T-cell (primary cell): ENCODE measurements at regions of chr1 and their contacts with region 1.

Region 1: DNA sequence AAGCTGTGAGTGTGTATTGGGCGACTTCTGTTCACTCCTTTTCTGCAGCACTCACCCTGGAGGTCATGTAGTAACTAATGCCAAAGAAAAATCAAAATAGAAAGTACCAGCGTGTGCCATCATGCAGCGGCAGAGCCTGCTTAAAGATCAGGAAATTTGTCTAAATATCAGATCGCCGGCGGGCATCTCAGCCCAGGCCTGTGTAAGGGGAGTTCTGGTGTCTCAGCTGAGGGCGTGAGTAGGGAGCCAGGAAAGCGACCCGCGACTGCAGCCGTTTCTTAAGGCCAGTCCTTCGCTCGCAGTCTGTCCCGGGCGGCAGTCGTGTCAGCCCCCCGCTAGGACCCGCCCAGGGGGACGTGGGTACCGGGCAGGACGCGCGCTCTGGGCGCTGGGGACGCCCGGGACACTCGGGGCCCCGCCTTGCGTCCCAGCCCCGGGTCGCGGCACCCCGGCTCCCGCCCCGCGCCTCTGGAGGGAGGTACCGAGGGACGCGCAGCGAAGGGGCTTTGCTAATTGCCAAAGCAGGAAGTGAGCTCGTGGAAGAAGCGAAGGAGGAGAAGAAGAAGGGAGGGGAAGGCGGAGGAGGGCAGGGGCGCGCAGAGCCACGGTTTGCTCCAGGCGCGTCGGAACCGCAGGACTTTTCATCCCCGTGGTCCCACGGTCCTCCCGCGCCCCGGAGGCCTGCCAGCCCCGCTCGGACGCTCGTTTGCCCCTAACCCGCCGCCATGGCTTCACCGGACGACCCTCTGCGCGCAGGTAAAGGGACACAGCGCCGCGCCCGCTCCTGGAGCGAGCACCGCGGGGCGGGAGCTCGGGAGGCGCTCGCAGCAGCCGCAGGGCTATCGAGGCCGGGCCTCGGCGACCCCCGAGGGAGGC is 1.1 kb downstream of the EDARADD start:
- DNase-seq: peak in 33 of 35 experiments; percentile 3 to 64 (median 29)
- ATAC-seq: peak; percentile 77 to 88 (median 82)
- H3K4me3 ChIP-seq: peak overlapping the region; percentile 56 to 79
- H3K4me3 Mint-ChIP-seq: peak overlapping the region; percentile 88 to 96 (median 90)
- H3K27ac ChIP-seq: peak overlapping the region; percentile 63
- H3K27ac Mint-ChIP-seq: peak overlapping the region; percentile 86 to 88
- H3K4me1 ChIP-seq: peaks cover 0 to 20% of the 10 kb centered on the region in 2 experiments
- H3K4me1 Mint-ChIP-seq: peaks cover 16 to 35% (median 23%) of the 10 kb centered on the region in 3 donors
- H3K27me3 ChIP-seq: peaks cover 0 to 15% of the 10 kb centered on the region in 2 experiments
- H3K27me3 Mint-ChIP-seq: peaks cover 36 to 39% of the 10 kb centered on the region in 2 donors

Region 2: GRCh38 chr1:236365999-236366570 is 29.1 kb before region 1 on chr1:
- CTCF ChIA-PET with region 1: no interaction called
- POLR2A ChIA-PET with region 1: no interaction called
- DNase-seq: no peak
- ATAC-seq: no peak
- H3K4me3 ChIP-seq: no peak overlapping the region
- H3K4me3 Mint-ChIP-seq: no peak overlapping the region
- H3K27ac ChIP-seq: no peak overlapping the region
- H3K27ac Mint-ChIP-seq: no peak overlapping the region
- H3K4me1 ChIP-seq: no peaks in the 10 kb centered on the region
- H3K4me1 Mint-ChIP-seq: no peaks in the 10 kb centered on the region
- H3K27me3 ChIP-seq: no peaks in the 10 kb centered on the region
- H3K27me3 Mint-ChIP-seq: peaks cover 0 to 2% of the 10 kb centered on the region in 2 donors

Region 3: GRCh38 chr1:236416165-236416564 is 21.0 kb after region 1 on chr1:
- CTCF ChIA-PET with region 1: interaction called in 1 of 2 experiments, 6 read pairs
- POLR2A ChIA-PET with region 1: interaction called, 3 to 14 read pairs
- DNase-seq: peak in 33 of 35 experiments; percentile 11 to 87 (median 33)
- ATAC-seq: peak; percentile 80 to 96 (median 92)
- H3K4me3 ChIP-seq: peak overlapping the region in 1 of 2 donors; percentile 41
- H3K4me3 Mint-ChIP-seq: peak overlapping the region; percentile 57 to 72 (median 69)
- H3K27ac ChIP-seq: peak overlapping the region; percentile 99
- H3K27ac Mint-ChIP-seq: peak overlapping the region; percentile 94 to 97
- H3K4me1 ChIP-seq: peaks cover 6 to 23% of the 10 kb centered on the region in 2 experiments
- H3K4me1 Mint-ChIP-seq: peaks cover 11 to 27% (median 20%) of the 10 kb centered on the region in 3 donors
- H3K27me3 ChIP-seq: peaks cover 0 to 2% of the 10 kb centered on the region in 2 experiments
- H3K27me3 Mint-ChIP-seq: peaks cover 0 to 3% of the 10 kb centered on the region in 2 donors